Panc1 (cell line): ENCODE measurements at regions of chrX and their contacts with region 1.

Region 1: DNA sequence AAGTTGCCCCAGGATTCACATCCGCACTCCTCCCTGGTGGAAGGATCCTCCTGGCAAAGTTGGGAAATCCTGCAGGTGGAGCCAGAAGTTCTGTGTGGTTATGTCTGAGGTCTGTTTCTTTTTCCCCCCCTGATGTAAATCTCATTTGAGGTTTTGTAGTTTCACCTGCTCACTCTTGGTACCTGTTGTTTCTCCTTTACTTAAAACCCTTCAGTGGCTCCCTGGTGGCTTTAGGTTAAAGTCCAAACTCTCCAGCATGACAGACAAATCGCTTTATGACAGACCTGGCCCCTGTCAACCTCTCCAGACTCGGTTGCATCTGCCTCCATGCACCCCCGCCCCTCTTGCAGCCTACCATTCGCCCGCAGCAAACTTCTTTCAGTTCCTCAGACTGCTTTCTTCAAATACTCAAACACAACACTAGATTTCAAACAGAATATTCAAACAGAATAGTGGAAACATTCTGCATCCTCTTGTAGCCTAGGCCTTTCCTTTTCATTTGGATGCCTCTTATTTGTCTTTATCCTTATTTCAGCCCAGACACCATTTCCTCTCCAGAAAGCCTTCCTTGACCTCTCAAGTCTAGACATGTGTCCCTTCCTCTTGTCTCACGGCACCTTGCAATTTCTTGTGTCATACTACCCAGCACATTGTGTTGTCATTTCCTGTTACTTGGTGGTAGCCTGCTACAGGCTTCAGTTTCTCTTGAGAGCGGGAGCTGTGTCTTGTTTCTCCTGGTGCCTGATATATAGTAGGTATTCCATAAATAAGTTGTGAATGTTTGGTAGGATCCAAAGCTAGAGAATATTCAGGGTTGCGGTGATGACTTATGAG is 24.8 kb downstream of the IL13RA1 start:
- DNase-seq: no peak
- ATAC-seq: no peak
- H3K4me3 ChIP-seq: no peak overlapping the region
- H3K27ac ChIP-seq: no peak overlapping the region
- H3K4me1 ChIP-seq: no peaks in the 10 kb centered on the region
- H3K27me3 ChIP-seq: no peaks in the 10 kb centered on the region
- CTCF ChIP-seq: no peak

Region 2: GRCh38 chrX:118325453-118325852 is 426.7 kb before region 1 on chrX:
- CTCF ChIA-PET with region 1: no interaction called
- POLR2A ChIA-PET with region 1: interaction called, 12 read pairs
- in situ Hi-C with region 1: no loop called
- intact Hi-C with region 1: no loop called
- DNase-seq: no peak
- ATAC-seq: peak; percentile 66; the same call in 1 of the 2 replicates
- H3K4me3 ChIP-seq: no peak overlapping the region
- H3K27ac ChIP-seq: no peak overlapping the region
- H3K4me1 ChIP-seq: no peaks in the 10 kb centered on the region
- H3K27me3 ChIP-seq: 0 out of 2 replicates have a peak, but pooled peaks cover 2% of the 10 kb centered on the region
- CTCF ChIP-seq: peak; percentile 62; the same call in 1 of the 2 replicates

Region 3: DNA sequence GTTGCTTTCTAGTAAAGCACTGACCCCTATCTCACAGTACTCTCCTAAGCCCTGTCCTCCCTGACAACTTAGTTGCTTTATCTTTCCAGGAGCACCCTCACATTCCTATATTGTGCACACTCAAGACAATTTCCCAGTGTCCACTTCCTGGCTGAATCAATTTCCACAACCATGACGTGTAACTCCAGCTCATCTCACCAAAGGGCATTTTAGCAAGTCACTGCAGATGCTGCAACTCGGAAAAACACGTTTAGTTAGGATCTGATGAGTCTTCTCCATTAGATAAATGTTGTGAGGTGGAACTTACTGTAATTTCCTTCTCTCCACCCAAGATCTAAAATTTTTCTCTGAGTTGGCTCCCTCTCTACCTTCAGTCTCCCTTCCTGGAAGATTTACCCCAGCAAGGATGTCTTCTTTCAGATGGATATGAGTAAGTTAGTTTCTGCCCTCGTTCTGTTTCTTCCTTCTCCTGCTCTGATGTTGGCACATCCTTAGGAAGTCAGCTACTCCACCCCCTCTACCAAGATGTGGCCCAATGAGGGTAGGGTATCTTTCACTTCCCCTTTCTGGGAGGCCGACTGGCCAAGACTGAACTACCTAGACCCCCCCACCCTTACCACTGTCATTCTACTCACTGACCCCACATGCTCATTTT is 53.5 kb before region 1 on chrX:
- CTCF ChIA-PET with region 1: no interaction called
- POLR2A ChIA-PET with region 1: no interaction called
- in situ Hi-C with region 1: no loop called
- intact Hi-C with region 1: no loop called
- DNase-seq: no peak
- ATAC-seq: no peak
- H3K4me3 ChIP-seq: no peak overlapping the region
- H3K27ac ChIP-seq: no peak overlapping the region
- H3K4me1 ChIP-seq: 0 out of 2 replicates have a peak, but pooled peaks cover 3% of the 10 kb centered on the region
- H3K27me3 ChIP-seq: no peaks in the 10 kb centered on the region
- CTCF ChIP-seq: no peak

Region 4: GRCh38 chrX:118740276-118740889 is 11.8 kb before region 1 on chrX:
- CTCF ChIA-PET with region 1: interaction called, 10 read pairs
- POLR2A ChIA-PET with region 1: no interaction called
- in situ Hi-C with region 1: no loop called
- intact Hi-C with region 1: no loop called
- DNase-seq: no peak
- ATAC-seq: no peak
- H3K4me3 ChIP-seq: no peak overlapping the region
- H3K27ac ChIP-seq: no peak overlapping the region
- H3K4me1 ChIP-seq: peaks cover 9% of the 10 kb centered on the region
- H3K27me3 ChIP-seq: no peaks in the 10 kb centered on the region
- CTCF ChIP-seq: no peak